Panc1 (cell line): ENCODE measurements at regions of chr7 and their contacts with region 1.

Region 1: DNA sequence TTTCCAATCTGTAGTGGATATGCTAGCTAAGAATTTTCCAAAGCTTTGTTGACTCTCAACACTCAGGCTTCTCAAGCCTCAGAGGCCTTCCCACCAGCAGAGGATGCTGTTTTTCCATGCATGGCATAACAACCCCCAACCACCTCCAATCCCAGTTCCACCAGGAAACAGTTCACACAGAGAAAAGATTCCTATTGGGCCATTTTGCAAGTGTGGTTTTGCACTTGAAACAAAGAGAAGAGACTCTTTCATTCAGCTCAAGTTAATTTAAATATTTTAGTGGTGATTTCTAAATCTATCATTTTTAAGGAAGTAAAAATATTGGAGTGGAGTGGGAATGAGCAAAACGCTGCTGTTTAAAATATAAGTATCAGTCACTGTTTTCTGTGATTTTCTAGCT is 105.6 kb upstream of the COL1A2 start:
- DNase-seq: peak; percentile 32
- ATAC-seq: peak; percentile 89; the same call in 1 of the 2 replicates
- H3K4me3 ChIP-seq: no peak overlapping the region
- H3K27ac ChIP-seq: no peak overlapping the region
- H3K4me1 ChIP-seq: no peaks in the 10 kb centered on the region
- H3K27me3 ChIP-seq: no peaks in the 10 kb centered on the region; the same call in 1 of the 2 replicates
- CTCF ChIP-seq: peak; percentile 93

Region 2: GRCh38 chr7:94436018-94436604 is 147.0 kb after region 1 on chr7:
- CTCF ChIA-PET with region 1: no interaction called
- POLR2A ChIA-PET with region 1: no interaction called
- in situ Hi-C with region 1: no loop called
- intact Hi-C with region 1: loop called (anchors 2 kb)
- DNase-seq: peak; percentile 39
- ATAC-seq: peak; percentile 93
- H3K4me3 ChIP-seq: no peak overlapping the region
- H3K27ac ChIP-seq: no peak overlapping the region
- H3K4me1 ChIP-seq: no peaks in the 10 kb centered on the region
- H3K27me3 ChIP-seq: no peaks in the 10 kb centered on the region; the same call in 1 of the 2 replicates
- CTCF ChIP-seq: peak; percentile 83